Ovary (tissue), 10 donors: ENCODE measurements at regions of chr21 and their contacts with region 1.

Region 1: DNA sequence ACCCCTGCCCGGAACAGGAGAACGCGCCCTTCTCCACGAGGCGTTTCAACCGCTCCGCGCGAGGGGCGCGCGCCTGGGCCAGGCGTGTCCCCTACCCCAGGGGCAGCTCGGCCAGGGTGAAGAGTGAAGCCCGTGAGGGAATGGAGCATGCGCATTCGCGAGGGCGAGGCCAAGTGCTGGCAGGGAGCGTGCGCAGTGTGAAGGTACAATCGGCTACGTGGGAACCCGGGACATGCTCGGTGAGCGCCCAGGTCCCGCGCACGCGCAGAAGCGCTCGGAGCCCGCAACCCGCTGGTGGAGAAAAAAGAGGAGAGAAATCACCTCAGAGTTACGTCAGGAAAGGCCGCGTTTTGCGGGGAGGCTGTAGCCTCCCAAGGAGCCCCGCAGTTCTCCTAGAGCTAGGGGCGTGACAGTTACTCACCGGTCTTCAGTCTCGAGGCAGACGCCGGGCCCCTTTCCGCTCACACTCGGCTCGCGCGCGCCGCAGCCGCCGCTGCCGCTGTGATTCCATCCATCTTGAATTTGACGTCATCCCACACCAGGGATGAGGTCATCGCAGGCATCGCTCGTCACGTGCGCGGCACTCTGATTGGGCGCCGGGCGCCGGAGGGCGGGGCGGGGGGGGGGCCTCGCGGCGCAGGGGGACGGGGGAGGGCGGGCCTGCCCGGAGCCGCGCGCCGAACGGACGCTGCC is at the start of gene ZBTB21:
- DNase-seq: peak; percentile 99
- H3K4me3 ChIP-seq: peak within 1 kb of the TSS; percentile 76
- H3K27ac ChIP-seq: peak within 1 kb of the TSS; percentile 92 to 99
- H3K4me1 ChIP-seq: peaks cover 2% of the 10 kb centered on the region
- H3K27me3 ChIP-seq: no peaks in the 10 kb centered on the region
- CTCF ChIP-seq: no peak
- EP300 ChIP-seq: peak; percentile 73
- POLR2A ChIP-seq: peak; percentile 97
- total RNA-seq, gene ZBTB21: 18.7 to 41.4 (median 23.4) TPM

Region 2: GRCh38 chr21:41217671-41218660 is 792.0 kb before region 1 on chr21:
- intact Hi-C with region 1: loop called in 1 of 4 experiments (anchors 5 kb)
- DNase-seq: no peak
- H3K4me3 ChIP-seq: no peak overlapping the region
- H3K27ac ChIP-seq: no peak overlapping the region
- H3K4me1 ChIP-seq: no peaks in the 10 kb centered on the region
- H3K27me3 ChIP-seq: no peaks in the 10 kb centered on the region
- CTCF ChIP-seq: no peak
- EP300 ChIP-seq: no peak
- POLR2A ChIP-seq: no peak

Region 3: GRCh38 chr21:41879190-41879998 is 130.6 kb before region 1 on chr21 and contains the start of gene PRDM15:
- intact Hi-C with region 1: loop called in 1 of 4 experiments (anchors 5 kb)
- DNase-seq: peak; percentile 80 to 89 (median 87)
- H3K4me3 ChIP-seq: peak within 1 kb of the TSS; percentile 80
- H3K27ac ChIP-seq: peak within 1 kb of the TSS; percentile 67 to 69
- H3K4me1 ChIP-seq: peaks cover 7% of the 10 kb centered on the region
- H3K27me3 ChIP-seq: no peaks in the 10 kb centered on the region
- CTCF ChIP-seq: no peak
- EP300 ChIP-seq: no peak
- POLR2A ChIP-seq: peak; percentile 26
- total RNA-seq, gene PRDM15: 5.2 to 10.9 (median 6.0) TPM

Region 4: GRCh38 chr21:41953831-41954653 is 55.9 kb before region 1 on chr21 and contains the start of gene C2CD2:
- intact Hi-C with region 1: loop called in 3 of 4 experiments (anchors 5 to 10 kb)
- DNase-seq: peak; percentile 72 to 82 (median 81)
- H3K4me3 ChIP-seq: peak within 1 kb of the TSS; percentile 90
- H3K27ac ChIP-seq: peak within 1 kb of the TSS; percentile 73 to 89
- H3K4me1 ChIP-seq: peaks cover 34% of the 10 kb centered on the region
- H3K27me3 ChIP-seq: no peaks in the 10 kb centered on the region
- CTCF ChIP-seq: no peak
- EP300 ChIP-seq: no peak
- POLR2A ChIP-seq: no peak
- total RNA-seq, gene C2CD2: 24.2 to 58.6 (median 37.4) TPM

Region 5: GRCh38 chr21:41961282-41961701 is 48.7 kb before region 1 on chr21:
- intact Hi-C with region 1: loop called in 3 of 4 experiments (anchors 5 to 10 kb)
- DNase-seq: peak in 1 of 5 donors; percentile 24
- H3K4me3 ChIP-seq: no peak overlapping the region
- H3K27ac ChIP-seq: no peak overlapping the region
- H3K4me1 ChIP-seq: peaks cover 7% of the 10 kb centered on the region
- H3K27me3 ChIP-seq: no peaks in the 10 kb centered on the region
- CTCF ChIP-seq: no peak
- EP300 ChIP-seq: no peak
- POLR2A ChIP-seq: no peak